ENCODE measurements at regions of chr17 and their contacts with region 1.

Region 1: GRCh38 chr17:9924735-9925191 is 19.7 kb upstream of the RCVRN start:
- DNase-seq: peak; percentile 50 to 76 (median 66)
- H3K4me3 ChIP-seq: no peak overlapping the region
- H3K27ac ChIP-seq: no peak overlapping the region
- H3K4me1 ChIP-seq: no peaks in the 10 kb centered on the region
- H3K27me3 ChIP-seq: no peaks in the 10 kb centered on the region

Region 2: DNA sequence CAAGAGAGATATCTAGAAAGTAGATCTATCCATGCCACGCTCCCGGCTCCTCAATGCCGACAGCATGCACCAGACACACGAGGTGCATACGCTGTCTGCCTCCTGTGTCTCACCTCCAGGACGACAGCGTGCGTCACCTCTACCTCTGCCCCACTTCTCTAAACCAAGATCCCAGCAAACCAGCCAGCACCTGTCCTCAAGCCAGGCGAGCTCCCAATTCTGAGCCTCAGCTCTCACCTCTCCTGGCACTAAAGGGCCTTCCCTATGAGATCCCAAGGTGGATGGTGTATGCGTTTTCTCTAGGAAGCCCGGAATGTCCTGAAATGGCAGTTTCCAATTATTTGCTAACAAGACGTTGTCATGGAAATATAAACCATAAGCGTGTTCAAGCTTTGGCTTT is 16.5 kb after region 1 on chr17:
- CTCF ChIA-PET with region 1: interaction called, 10 read pairs
- POLR2A ChIA-PET with region 1: no interaction called
- DNase-seq: no peak
- H3K4me3 ChIP-seq: no peak overlapping the region
- H3K27ac ChIP-seq: no peak overlapping the region
- H3K4me1 ChIP-seq: peaks cover 0 to 7% (median 3%) of the 10 kb centered on the region in 4 experiments
- H3K27me3 ChIP-seq: no peaks in the 10 kb centered on the region

Region 3: DNA sequence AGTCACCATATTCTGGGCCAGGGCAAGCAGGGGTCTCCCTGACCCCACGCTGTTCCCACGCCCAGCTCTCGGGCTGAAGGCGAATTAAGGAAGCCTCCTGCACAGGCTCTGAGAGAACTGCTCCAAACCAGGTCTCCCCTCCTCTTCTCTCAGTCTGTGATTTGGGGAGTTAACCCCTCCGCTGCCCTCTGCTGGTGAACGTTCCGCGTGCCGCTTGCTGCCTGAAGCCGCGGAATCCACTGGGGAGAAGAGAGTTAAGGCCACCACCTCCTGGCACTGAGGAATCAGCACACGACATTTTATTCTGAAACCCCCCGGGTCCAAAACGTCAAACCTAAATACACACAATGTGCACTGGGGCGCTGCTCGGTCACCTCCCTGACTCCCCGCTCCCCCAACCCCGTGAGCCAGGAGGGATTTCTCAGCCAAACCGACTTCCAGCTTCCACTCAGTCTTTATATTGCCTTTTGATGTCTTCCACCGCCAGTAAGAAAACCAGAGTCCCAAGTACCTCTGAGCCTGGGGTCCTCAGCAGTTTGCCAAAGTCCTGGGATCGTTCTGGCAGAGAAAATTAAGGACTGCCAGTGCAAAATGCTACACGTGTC is 34.7 kb after region 1 on chr17:
- CTCF ChIA-PET with region 1: interaction called, 20 read pairs
- POLR2A ChIA-PET with region 1: no interaction called
- DNase-seq: peak; percentile 52 to 72 (median 69)
- H3K4me3 ChIP-seq: no peak overlapping the region
- H3K27ac ChIP-seq: no peak overlapping the region
- H3K4me1 ChIP-seq: peaks cover 0 to 4% (median 1%) of the 10 kb centered on the region in 4 experiments
- H3K27me3 ChIP-seq: peaks cover 0 to 12% (median 0%) of the 10 kb centered on the region in 5 experiments

Region 4: DNA sequence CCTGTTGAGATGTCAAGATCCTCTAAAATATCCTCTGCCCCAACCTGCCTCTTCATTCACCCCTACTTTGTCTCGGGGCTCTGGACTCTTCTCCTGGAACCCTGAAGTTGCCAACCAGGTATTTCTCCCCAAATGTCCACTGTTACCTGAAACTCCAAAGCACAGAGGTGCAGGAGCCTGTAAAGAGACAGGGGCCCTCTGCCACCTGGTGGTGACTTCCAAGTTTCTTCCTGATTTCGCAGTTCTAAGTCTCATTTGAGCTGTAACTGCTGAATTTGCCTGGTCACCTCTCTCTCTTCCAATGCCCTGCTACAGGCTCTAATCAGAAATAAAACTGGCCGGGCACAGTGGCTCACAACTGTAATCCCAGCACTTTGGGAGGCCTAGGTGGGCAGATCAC is 57.4 kb after region 1 on chr17:
- CTCF ChIA-PET with region 1: interaction called, 23 read pairs
- POLR2A ChIA-PET with region 1: no interaction called
- DNase-seq: peak; percentile 42 to 69 (median 62)
- H3K4me3 ChIP-seq: no peak overlapping the region
- H3K27ac ChIP-seq: no peak overlapping the region
- H3K4me1 ChIP-seq: peaks cover 5 to 15% (median 8%) of the 10 kb centered on the region in 4 experiments
- H3K27me3 ChIP-seq: no peaks in the 10 kb centered on the region

Region 5: DNA sequence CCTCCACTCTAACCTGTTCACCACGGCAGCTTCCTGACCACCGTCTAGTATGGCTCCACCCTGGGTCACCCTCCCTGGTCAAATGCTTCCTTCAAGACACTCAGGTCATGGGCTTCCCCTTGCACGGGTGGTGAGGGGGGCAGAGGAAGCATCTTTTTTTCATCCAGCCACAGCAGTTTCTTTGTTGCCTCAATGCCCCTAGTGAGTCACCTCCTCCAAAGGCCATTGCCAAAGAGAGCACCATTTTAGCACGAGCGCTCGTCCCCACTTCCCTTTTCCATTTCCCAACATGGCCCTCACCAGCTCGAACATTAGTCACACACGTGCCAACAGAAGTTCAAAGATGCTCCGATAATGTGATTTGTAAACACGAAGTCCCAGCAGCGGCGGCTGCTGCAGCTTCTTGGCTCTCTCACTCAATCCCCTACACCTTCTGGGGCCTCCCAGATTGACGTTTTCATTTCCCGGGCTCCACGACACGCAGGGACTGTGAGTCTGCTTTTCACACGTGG is 139.0 kb after region 1 on chr17:
- CTCF ChIA-PET with region 1: no interaction called
- POLR2A ChIA-PET with region 1: no interaction called
- DNase-seq: peak; percentile 39 to 89 (median 87)
- H3K4me3 ChIP-seq: no peak overlapping the region
- H3K27ac ChIP-seq: no peak overlapping the region
- H3K4me1 ChIP-seq: peaks cover 2 to 34% (median 30%) of the 10 kb centered on the region in 4 experiments
- H3K27me3 ChIP-seq: no peaks in the 10 kb centered on the region